HepG2 (cell line): ENCODE measurements at regions of chr1 and their contacts with region 1.

Region 1: DNA sequence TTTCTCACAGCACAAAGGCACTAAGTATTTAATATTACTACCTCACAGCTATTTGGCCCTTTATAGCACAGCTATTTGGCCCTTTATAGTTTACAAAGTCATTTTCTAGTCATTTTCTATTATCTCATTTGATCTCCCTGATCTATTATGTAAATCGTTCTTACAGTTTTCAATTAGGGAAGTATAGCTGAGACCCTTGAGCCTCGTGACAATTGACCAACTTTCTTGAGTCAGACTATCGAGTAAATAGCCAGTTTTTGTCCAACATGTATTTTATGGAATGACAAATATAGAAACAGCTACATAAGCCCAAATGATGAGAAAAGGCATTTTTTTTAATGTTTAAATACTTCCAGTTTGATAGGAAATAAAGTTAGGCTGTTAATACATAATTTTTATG is 7.0 kb upstream of the ANGPTL1 start:
- DNase-seq: no peak
- ATAC-seq: no peak
- H3K4me3 ChIP-seq: no peak overlapping the region
- H3K27ac ChIP-seq: no peak overlapping the region
- H3K4me1 ChIP-seq: peaks cover 1% of the 10 kb centered on the region
- H3K27me3 ChIP-seq: no peaks in the 10 kb centered on the region
- CTCF ChIP-seq: no peak
- EP300 ChIP-seq: no peak
- POLR2A ChIP-seq: no peak
- RAD21 ChIP-seq: no peak

Region 2: DNA sequence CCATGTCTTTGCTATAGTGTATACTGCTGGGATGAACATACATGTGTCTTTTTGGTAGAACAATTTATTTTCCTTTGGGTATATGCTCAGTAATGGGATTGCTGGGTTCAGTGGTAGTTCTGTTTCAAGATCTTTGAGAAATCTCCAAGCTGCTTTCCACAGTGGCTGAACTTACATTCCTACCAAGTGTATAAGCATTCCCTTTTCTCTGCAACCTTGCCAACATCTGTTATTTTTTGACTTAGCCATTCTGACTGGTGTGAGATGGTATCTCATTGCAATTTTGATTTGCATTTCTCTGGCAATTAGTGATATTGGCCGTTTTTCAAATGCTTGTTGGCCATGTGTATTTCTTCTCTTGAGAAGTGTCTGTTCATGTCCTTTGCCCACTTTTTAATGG is 30.5 kb after region 1 on chr1:
- CTCF ChIA-PET with region 1: no interaction called
- POLR2A ChIA-PET with region 1: no interaction called
- in situ Hi-C with region 1: no loop called
- intact Hi-C with region 1: loop called (anchors 1 kb)
- DNase-seq: no peak
- ATAC-seq: no peak
- H3K4me3 ChIP-seq: no peak overlapping the region
- H3K27ac ChIP-seq: no peak overlapping the region
- H3K4me1 ChIP-seq: no peaks in the 10 kb centered on the region; the same call in 1 of the 2 replicates
- H3K27me3 ChIP-seq: no peaks in the 10 kb centered on the region
- CTCF ChIP-seq: no peak
- EP300 ChIP-seq: no peak
- POLR2A ChIP-seq: no peak
- RAD21 ChIP-seq: no peak